ENCODE measurements at regions of chr14 and their contacts with region 1.

Region 1: DNA sequence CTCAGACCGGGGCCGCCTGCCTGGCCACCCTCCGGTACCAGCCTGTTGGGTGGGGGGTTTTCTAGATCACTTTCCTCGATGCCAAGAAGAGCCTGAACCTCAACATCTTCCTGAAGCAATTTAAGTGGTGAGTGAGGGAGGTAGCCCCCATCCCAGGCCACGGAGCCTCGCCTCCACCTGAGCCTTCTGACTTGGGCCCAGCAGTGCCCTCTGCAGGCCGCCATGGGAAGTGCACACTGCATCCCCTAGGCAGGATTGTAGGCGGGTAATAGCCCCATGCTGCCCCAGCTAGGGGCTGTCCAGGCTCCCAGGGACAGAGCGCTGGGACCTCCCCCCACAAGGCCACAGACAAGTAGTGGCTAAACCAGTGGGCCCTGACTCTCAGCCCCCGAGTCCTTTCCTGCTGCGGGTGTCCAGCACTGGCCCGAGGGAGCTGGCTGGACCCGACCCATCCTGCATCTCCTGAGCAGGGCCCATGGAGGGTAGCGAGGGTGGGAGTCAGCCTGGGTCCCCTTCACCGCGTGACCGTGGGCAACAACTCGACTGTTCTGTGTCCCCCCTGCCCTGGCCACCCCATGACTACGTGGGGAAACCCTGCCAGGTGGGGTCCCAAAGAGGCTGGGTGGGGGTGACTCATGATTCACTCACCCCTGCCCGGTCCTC is 15.3 kb upstream of the ADSS1 start:
- DNase-seq: peak; percentile 53 to 84 (median 73)
- ATAC-seq: peak; percentile 98
- H3K4me3 ChIP-seq: no peak overlapping the region
- H3K4me3 Mint-ChIP-seq: no peak overlapping the region
- H3K27ac ChIP-seq: no peak overlapping the region
- H3K27ac Mint-ChIP-seq: no peak overlapping the region
- H3K4me1 ChIP-seq: no peaks in the 10 kb centered on the region
- H3K4me1 Mint-ChIP-seq: peaks cover 2% of the 10 kb centered on the region
- H3K27me3 ChIP-seq: no peaks in the 10 kb centered on the region
- H3K27me3 Mint-ChIP-seq: no peaks in the 10 kb centered on the region
- CTCF ChIP-seq: peak; percentile 94

Region 2: GRCh38 chr14:104650057-104650981 is 58.4 kb before region 1 on chr14:
- CTCF ChIA-PET with region 1: interaction called, 11 read pairs
- POLR2A ChIA-PET with region 1: no interaction called
- intact Hi-C with region 1: loop called (anchors 1 kb)
- DNase-seq: peak; percentile 49 to 84 (median 67)
- ATAC-seq: peak; percentile 90
- H3K4me3 ChIP-seq: peak overlapping the region; percentile 16 to 46
- H3K4me3 Mint-ChIP-seq: peak overlapping the region; percentile 58
- H3K27ac ChIP-seq: no peak overlapping the region
- H3K27ac Mint-ChIP-seq: no peak overlapping the region
- H3K4me1 ChIP-seq: peaks cover 9% of the 10 kb centered on the region
- H3K4me1 Mint-ChIP-seq: peaks cover 1% of the 10 kb centered on the region
- H3K27me3 ChIP-seq: peaks cover 0 to 8% of the 10 kb centered on the region in 2 experiments
- H3K27me3 Mint-ChIP-seq: peaks cover 8% of the 10 kb centered on the region
- CTCF ChIP-seq: peak; percentile 93

Region 3: DNA sequence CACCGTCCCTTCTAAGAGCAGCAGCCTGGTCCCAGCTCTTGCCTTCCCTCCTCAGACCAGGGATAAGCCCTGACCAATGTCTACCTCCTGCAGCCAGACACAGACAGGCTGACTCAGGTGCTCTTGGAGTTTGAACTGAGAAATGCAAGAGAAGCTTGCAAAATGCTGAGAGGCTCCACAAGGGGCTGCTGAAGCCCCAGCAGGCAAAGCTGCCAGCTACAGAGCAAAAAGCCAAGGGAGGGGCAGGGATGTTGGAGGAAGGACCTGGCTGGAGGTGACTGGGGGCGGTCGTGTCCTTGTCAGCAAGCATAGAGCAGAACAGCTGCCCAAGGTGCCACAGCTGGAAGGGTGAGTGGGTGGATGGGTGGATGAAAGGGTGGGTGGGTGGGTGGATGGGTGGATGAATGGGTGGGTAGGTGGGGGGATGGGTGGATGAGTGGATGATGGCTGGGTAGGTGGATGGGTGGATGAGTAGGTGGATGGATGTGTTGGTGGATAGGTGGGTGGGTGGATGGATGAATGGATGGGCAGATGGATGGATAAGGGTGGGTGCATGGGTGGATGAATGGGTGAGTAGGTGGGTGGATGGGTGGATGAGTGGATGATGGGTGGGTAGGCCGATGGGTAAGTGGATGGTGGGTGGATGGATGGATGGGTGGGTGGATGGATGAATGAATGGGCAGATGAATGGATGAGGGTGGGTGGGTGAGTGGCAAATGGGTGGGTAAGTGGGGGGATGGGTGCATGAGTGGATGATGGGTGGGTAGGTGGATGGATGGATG is 23.3 kb before region 1 on chr14:
- CTCF ChIA-PET with region 1: interaction called, 5 read pairs
- POLR2A ChIA-PET with region 1: interaction called, 3 read pairs
- intact Hi-C with region 1: loop called in 1 of 2 experiments (anchors 1 kb)
- DNase-seq: peak in 1 of 9 experiments; percentile 29
- ATAC-seq: no peak
- H3K4me3 ChIP-seq: no peak overlapping the region
- H3K4me3 Mint-ChIP-seq: no peak overlapping the region
- H3K27ac ChIP-seq: no peak overlapping the region
- H3K27ac Mint-ChIP-seq: peak overlapping the region; percentile 52
- H3K4me1 ChIP-seq: peaks cover 39% of the 10 kb centered on the region
- H3K4me1 Mint-ChIP-seq: peaks cover 29% of the 10 kb centered on the region
- H3K27me3 ChIP-seq: no peaks in the 10 kb centered on the region
- H3K27me3 Mint-ChIP-seq: no peaks in the 10 kb centered on the region
- CTCF ChIP-seq: no peak